Sigmoid colon (tissue), 7 donors: ENCODE measurements at regions of chr10 and their contacts with region 1.

Region 1: GRCh38 chr10:32378363-32379317 is 31.7 kb upstream of the EPC1 start:
- DNase-seq: peak; percentile 98
- H3K4me3 ChIP-seq: peak overlapping the region; percentile 51 to 76 (median 64)
- H3K27ac ChIP-seq: peak overlapping the region; percentile 76 to 91 (median 88)
- H3K4me1 ChIP-seq: peaks cover 0 to 39% (median 19%) of the 10 kb centered on the region in 4 donors
- H3K27me3 ChIP-seq: no peaks in the 10 kb centered on the region
- CTCF ChIP-seq: no peak
- EP300 ChIP-seq: peak in 1 of 4 donors; percentile 11
- POLR2A ChIP-seq: peak in 1 of 2 donors; percentile 29

Region 2: DNA sequence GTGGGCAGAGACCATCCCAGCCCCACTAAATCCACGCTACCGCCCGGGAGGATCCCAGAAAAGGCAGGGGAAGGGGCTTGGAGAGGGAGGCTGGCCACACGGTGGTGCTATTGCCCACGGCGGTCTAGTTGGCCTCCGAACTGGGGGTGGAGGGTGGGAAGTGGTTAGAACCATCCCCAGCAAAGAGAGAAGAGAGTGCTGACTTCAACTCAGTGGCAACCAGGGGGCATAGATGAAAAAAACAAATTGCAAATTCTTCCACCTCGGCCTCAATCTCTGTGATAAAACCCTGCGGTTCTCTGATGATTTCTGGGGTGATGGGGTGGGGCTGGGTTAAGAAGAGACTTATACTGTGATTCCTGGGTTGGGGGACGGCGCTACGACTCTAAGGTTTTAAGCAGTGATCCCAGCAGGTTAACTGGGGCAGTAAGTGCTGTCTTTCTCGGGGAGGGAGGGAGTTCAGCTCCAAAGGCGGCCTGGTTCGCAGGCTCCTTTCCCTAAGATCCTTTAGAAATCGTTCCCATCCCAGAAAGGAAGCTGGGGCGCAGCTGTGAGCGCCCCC is 1594.6 kb before region 1 on chr10:
- intact Hi-C with region 1: no loop called
- DNase-seq: peak; percentile 94
- H3K4me3 ChIP-seq: peak overlapping the region; percentile 47 to 74 (median 61)
- H3K27ac ChIP-seq: peak overlapping the region; percentile 92 to 99 (median 93)
- H3K4me1 ChIP-seq: peaks cover 0 to 47% (median 38%) of the 10 kb centered on the region in 4 donors
- H3K27me3 ChIP-seq: no peaks in the 10 kb centered on the region
- CTCF ChIP-seq: peak; percentile 91 to 94 (median 93)
- EP300 ChIP-seq: no peak
- POLR2A ChIP-seq: no peak

Region 3: DNA sequence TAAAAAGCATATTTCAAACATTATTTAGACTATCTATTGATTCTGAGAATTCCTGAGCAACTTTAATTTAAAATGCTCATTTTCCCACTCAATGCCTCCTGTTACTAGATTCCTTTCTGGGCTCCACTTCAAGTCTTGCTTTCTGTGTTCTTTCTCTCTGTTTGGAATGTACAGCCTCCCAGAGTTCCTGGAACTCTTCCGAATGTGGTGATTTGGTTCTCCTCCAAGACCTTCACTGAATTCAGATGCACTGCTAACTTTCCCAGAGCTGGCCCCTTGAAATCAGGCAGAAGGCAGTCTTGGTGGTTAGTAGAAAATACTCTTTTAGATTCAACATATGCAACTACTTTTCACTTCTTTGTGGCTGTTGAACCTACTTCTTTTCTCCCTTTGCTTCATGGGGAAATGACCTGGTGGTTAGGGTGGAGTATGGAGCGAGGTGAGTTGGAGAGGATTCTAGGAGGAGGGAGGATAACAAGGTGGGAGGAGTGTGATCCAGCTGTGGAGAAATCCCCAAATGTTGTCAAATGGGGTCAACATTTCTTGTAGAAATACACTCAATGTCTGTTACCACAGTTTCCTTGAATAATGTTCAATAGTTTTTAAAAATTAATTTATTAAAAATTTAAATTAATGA is 39.4 kb after region 1 on chr10:
- intact Hi-C with region 1: loop called (anchors 5 kb)
- DNase-seq: peak; percentile 72
- H3K4me3 ChIP-seq: no peak overlapping the region
- H3K27ac ChIP-seq: peak overlapping the region; percentile 69 to 81 (median 76)
- H3K4me1 ChIP-seq: peaks cover 0 to 40% (median 32%) of the 10 kb centered on the region in 4 donors
- H3K27me3 ChIP-seq: no peaks in the 10 kb centered on the region
- CTCF ChIP-seq: no peak
- EP300 ChIP-seq: no peak
- POLR2A ChIP-seq: no peak

Region 4: GRCh38 chr10:32445740-32446535 is 67.3 kb after region 1 on chr10 and contains the start of gene CCDC7:
- intact Hi-C with region 1: loop called (anchors 2 kb)
- DNase-seq: peak; percentile 91
- H3K4me3 ChIP-seq: peak within 1 kb of the TSS; percentile 60 to 73 (median 61)
- H3K27ac ChIP-seq: peak within 1 kb of the TSS; percentile 91 to 97 (median 94)
- H3K4me1 ChIP-seq: peaks cover 0 to 20% (median 10%) of the 10 kb centered on the region in 4 donors
- H3K27me3 ChIP-seq: no peaks in the 10 kb centered on the region
- CTCF ChIP-seq: peak in 2 of 4 experiments; percentile 23 to 46
- EP300 ChIP-seq: no peak
- POLR2A ChIP-seq: peak; percentile 19 to 48
- total RNA-seq, gene CCDC7: 42.9 to 84.9 (median 50.5) TPM